Caco-2 (cell line): ENCODE measurements at regions of chr20 and their contacts with region 1.

Region 1: DNA sequence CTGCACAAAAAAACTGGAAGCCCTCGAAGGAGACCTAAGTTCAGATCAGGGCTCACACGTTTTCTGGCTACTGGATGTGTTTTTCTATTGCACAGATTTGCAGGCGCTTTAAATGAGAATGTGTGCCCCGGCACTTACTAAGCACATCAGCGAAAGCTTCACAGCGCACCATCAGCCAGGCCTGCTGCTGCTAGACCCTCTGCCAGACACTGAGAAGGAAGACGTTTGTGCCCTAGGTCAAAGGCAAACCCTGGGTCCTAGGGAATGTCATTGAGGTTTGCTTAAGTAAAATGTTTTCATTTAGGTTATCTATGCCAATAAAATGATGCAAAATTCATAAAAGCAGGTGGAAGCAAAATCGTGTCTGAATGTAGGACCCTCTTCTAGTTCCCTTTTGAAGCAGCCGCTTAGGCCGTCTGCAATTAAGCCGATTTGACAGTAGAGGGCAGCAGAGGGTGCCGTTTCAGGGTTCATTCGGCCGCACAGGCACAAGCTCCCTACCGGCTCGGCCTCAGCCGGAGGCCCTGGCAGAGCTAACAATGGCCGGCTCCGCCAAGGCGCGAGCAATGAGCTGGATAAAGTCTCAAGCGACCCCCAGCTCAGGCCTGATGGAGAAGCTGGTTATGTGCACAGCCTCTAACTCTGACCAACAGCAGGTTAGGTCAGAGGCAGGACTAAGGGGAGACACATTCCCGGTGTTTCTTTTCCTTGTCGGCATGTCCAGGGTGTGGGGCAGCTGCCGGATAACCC is 107.2 kb upstream of the FOXA2 start:
- DNase-seq: peak; percentile 81 to 83
- H3K4me3 ChIP-seq: no peak overlapping the region
- H3K4me3 Mint-ChIP-seq: no peak overlapping the region
- H3K27ac Mint-ChIP-seq: no peak overlapping the region
- H3K4me1 ChIP-seq: peaks cover 6% of the 10 kb centered on the region; the same call in 1 of the 2 replicates
- H3K4me1 Mint-ChIP-seq: peaks cover 2% of the 10 kb centered on the region
- H3K27me3 ChIP-seq: no peaks in the 10 kb centered on the region
- H3K27me3 Mint-ChIP-seq: no peaks in the 10 kb centered on the region
- CTCF ChIP-seq: peak; percentile 83 to 96

Region 2: DNA sequence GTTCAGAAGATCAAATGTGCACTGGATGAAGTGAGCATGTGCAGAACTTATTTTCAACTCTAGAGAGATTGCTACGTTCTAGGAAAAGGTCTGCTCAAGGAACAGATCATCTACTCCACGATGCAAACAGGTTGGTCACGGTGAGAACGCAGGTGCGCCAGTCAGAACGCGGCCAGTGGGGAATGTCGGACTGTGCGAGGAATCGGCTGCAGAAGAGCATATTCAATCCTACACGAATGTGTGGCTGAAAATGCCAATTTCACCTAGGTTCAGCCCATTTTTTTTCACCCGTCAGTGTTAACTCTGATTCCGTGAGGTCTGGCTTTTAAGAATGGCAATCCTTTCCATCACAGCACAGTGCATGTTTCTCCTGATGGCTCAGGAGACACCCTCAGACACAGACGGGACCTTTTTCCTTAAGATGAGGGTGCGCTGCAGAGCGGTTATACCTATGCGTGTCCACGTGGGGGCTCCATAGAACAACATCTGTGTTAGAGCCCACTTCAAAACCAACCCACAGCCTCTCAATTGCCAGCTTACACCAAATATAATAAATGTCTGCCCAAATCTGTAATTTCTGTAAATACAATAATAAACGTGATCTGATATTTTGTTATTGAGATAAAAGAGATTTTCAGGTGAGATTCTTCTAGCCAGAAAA is 357.5 kb before region 1 on chr20:
- CTCF ChIA-PET with region 1: interaction called, 13 read pairs
- POLR2A ChIA-PET with region 1: no interaction called
- intact Hi-C with region 1: no loop called
- DNase-seq: peak; percentile 69 to 78
- H3K4me3 ChIP-seq: no peak overlapping the region
- H3K4me3 Mint-ChIP-seq: no peak overlapping the region
- H3K27ac Mint-ChIP-seq: no peak overlapping the region
- H3K4me1 ChIP-seq: no peaks in the 10 kb centered on the region; the same call in 1 of the 2 replicates
- H3K4me1 Mint-ChIP-seq: peaks cover 2% of the 10 kb centered on the region
- H3K27me3 ChIP-seq: peaks cover 1% of the 10 kb centered on the region; the same call in 1 of the 2 replicates
- H3K27me3 Mint-ChIP-seq: peaks cover 28% of the 10 kb centered on the region
- CTCF ChIP-seq: peak; percentile 84 to 86

Region 3: GRCh38 chr20:22672191-22672590 is 19.4 kb before region 1 on chr20:
- CTCF ChIA-PET with region 1: no interaction called
- POLR2A ChIA-PET with region 1: no interaction called
- intact Hi-C with region 1: no loop called
- DNase-seq: no peak
- H3K4me3 ChIP-seq: no peak overlapping the region
- H3K4me3 Mint-ChIP-seq: no peak overlapping the region
- H3K27ac Mint-ChIP-seq: no peak overlapping the region
- H3K4me1 ChIP-seq: no peaks in the 10 kb centered on the region
- H3K4me1 Mint-ChIP-seq: no peaks in the 10 kb centered on the region
- H3K27me3 ChIP-seq: no peaks in the 10 kb centered on the region
- H3K27me3 Mint-ChIP-seq: no peaks in the 10 kb centered on the region
- CTCF ChIP-seq: no peak

Region 4: DNA sequence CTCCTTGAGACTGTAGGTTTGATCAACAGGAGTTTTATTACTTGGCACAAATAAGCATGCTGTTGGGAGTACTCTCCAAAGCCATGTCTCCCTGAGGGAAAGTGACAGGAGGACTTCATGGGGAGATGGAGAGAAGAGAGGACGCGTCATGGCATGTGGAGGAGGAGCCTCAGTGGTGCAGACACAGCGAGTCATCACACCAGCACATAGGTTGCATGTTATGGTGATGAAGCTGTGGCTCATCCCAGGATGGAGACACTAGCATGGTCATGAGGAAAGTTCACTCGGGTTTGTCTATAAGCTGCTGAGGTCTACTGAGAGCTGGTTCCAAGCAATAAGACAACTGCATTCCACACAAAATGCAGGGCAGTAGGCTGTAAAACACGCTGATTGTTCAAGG is 330.4 kb after region 1 on chr20:
- CTCF ChIA-PET with region 1: interaction called, 4 read pairs
- POLR2A ChIA-PET with region 1: interaction called, 4 read pairs
- intact Hi-C with region 1: loop called (anchors 5 kb)
- DNase-seq: no peak
- H3K4me3 ChIP-seq: no peak overlapping the region
- H3K4me3 Mint-ChIP-seq: no peak overlapping the region
- H3K27ac Mint-ChIP-seq: peak overlapping the region; percentile 84
- H3K4me1 ChIP-seq: peaks cover 73% of the 10 kb centered on the region
- H3K4me1 Mint-ChIP-seq: peaks cover 54% of the 10 kb centered on the region
- H3K27me3 ChIP-seq: no peaks in the 10 kb centered on the region
- H3K27me3 Mint-ChIP-seq: no peaks in the 10 kb centered on the region
- CTCF ChIP-seq: no peak

Region 5: GRCh38 chr20:23200918-23201317 is 509.4 kb after region 1 on chr20:
- CTCF ChIA-PET with region 1: interaction called, 11 read pairs
- POLR2A ChIA-PET with region 1: no interaction called
- intact Hi-C with region 1: no loop called
- DNase-seq: peak; percentile 61 to 66
- H3K4me3 ChIP-seq: no peak overlapping the region
- H3K4me3 Mint-ChIP-seq: no peak overlapping the region
- H3K27ac Mint-ChIP-seq: no peak overlapping the region
- H3K4me1 ChIP-seq: peaks cover 12% of the 10 kb centered on the region; the same call in 1 of the 2 replicates
- H3K4me1 Mint-ChIP-seq: peaks cover 34% of the 10 kb centered on the region
- H3K27me3 ChIP-seq: no peaks in the 10 kb centered on the region
- H3K27me3 Mint-ChIP-seq: no peaks in the 10 kb centered on the region
- CTCF ChIP-seq: peak; percentile 33 to 44

Region 6: GRCh38 chr20:23350196-23350903 is 658.8 kb after region 1 on chr20 and contains the start of gene NXT1:
- CTCF ChIA-PET with region 1: interaction called, 12 read pairs
- POLR2A ChIA-PET with region 1: no interaction called
- intact Hi-C with region 1: no loop called
- DNase-seq: peak; percentile 98 to 99
- H3K4me3 ChIP-seq: peak within 1 kb of the TSS; percentile 98
- H3K4me3 Mint-ChIP-seq: peak within 1 kb of the TSS; percentile 89
- H3K27ac Mint-ChIP-seq: peak within 1 kb of the TSS; percentile 100
- H3K4me1 ChIP-seq: peaks cover 17% of the 10 kb centered on the region
- H3K4me1 Mint-ChIP-seq: peaks cover 16% of the 10 kb centered on the region
- H3K27me3 ChIP-seq: no peaks in the 10 kb centered on the region
- H3K27me3 Mint-ChIP-seq: no peaks in the 10 kb centered on the region
- CTCF ChIP-seq: no peak
- total RNA-seq, gene NXT1: 33.6 and 34.1 TPM in 2 replicates